A673 (cell line): ENCODE measurements at regions of chr7 and their contacts with region 1.

Region 1: GRCh38 chr7:131424219-131424822 is 96.6 kb downstream of the MKLN1 start:
- DNase-seq: peak; percentile 75
- H3K4me3 ChIP-seq: no peak overlapping the region
- H3K27ac ChIP-seq: no peak overlapping the region
- H3K4me1 ChIP-seq: no peaks in the 10 kb centered on the region
- H3K27me3 ChIP-seq: no peaks in the 10 kb centered on the region
- CTCF ChIP-seq: peak; percentile 72

Region 2: GRCh38 chr7:131071786-131072504 is 352.4 kb before region 1 on chr7:
- CTCF ChIA-PET with region 1: no interaction called
- POLR2A ChIA-PET with region 1: no interaction called
- intact Hi-C with region 1: loop called (anchors 2 kb)
- DNase-seq: peak; percentile 97
- H3K4me3 ChIP-seq: peak overlapping the region; percentile 35
- H3K27ac ChIP-seq: peak overlapping the region; percentile 78
- H3K4me1 ChIP-seq: peaks cover 52% of the 10 kb centered on the region
- H3K27me3 ChIP-seq: no peaks in the 10 kb centered on the region
- CTCF ChIP-seq: peak; percentile 72

Region 3: GRCh38 chr7:132343199-132343598 is 918.9 kb after region 1 on chr7:
- CTCF ChIA-PET with region 1: no interaction called
- POLR2A ChIA-PET with region 1: no interaction called
- intact Hi-C with region 1: no loop called
- DNase-seq: no peak
- H3K4me3 ChIP-seq: no peak overlapping the region
- H3K27ac ChIP-seq: no peak overlapping the region
- H3K4me1 ChIP-seq: no peaks in the 10 kb centered on the region
- H3K27me3 ChIP-seq: peaks cover 30% of the 10 kb centered on the region
- CTCF ChIP-seq: no peak